Activated CD4-positive, alpha-beta memory T cell treated with anti-CD3 and anti-CD28 coated beads for 36 hours (primary cell): ENCODE measurements at regions of chr17 and their contacts with region 1.

Region 1: DNA sequence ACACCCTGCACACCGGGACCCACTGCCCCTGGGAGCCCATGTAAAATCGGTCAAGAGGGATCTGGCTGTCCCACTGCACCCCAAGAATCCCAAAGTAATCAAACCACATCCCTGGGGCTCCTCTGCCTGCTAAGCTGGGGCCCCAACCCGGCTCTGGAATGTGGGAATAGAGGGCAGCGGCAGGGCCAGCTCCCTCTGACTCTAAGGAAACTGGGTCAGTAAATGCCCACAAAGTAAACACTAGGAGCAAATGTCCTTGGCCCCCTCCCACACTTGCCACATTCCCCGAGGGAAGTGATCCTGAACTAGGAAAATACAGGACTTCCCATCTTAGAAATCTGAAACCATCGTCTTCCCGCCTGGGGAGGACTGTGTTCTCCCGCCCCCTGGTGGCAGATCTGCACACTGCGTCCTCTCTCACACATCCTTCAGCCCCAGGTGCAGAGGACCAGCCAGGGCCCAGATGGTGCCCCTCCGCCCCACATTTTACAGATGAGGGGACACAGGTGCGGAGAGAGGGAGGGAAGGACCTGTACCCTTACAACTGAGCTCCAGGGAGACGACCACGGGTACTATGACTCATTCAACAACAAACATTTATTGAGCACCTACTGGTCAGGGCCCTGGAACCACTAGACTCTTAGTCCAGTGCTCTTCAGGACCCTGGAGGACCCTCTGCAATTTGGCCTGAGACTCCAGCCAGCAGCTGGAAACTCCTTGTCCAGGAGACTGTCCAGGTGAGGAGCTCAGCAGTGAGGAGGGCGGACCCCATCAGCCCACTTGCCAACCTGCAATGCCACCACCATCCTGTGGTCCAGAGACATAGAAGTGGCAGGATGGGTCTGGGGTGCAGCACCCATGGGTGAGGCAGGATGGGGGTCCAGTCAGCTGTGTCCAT is 10.1 kb downstream of the P3H4 start:
- DNase-seq: peak; percentile 82
- H3K4me3 Mint-ChIP-seq: no peak overlapping the region
- H3K27ac Mint-ChIP-seq: peak overlapping the region; percentile 31
- H3K4me1 Mint-ChIP-seq: peaks cover 3% of the 10 kb centered on the region
- H3K27me3 Mint-ChIP-seq: no peaks in the 10 kb centered on the region

Region 2: GRCh38 chr17:41738077-41738735 is 63.4 kb before region 1 on chr17:
- CTCF ChIA-PET with region 1: interaction called, 65 read pairs
- POLR2A ChIA-PET with region 1: no interaction called
- intact Hi-C with region 1: loop called (anchors 1 kb)
- DNase-seq: peak; percentile 89
- H3K4me3 Mint-ChIP-seq: no peak overlapping the region
- H3K27ac Mint-ChIP-seq: no peak overlapping the region
- H3K4me1 Mint-ChIP-seq: peaks cover 5% of the 10 kb centered on the region
- H3K27me3 Mint-ChIP-seq: peaks cover 28% of the 10 kb centered on the region

Region 3: DNA sequence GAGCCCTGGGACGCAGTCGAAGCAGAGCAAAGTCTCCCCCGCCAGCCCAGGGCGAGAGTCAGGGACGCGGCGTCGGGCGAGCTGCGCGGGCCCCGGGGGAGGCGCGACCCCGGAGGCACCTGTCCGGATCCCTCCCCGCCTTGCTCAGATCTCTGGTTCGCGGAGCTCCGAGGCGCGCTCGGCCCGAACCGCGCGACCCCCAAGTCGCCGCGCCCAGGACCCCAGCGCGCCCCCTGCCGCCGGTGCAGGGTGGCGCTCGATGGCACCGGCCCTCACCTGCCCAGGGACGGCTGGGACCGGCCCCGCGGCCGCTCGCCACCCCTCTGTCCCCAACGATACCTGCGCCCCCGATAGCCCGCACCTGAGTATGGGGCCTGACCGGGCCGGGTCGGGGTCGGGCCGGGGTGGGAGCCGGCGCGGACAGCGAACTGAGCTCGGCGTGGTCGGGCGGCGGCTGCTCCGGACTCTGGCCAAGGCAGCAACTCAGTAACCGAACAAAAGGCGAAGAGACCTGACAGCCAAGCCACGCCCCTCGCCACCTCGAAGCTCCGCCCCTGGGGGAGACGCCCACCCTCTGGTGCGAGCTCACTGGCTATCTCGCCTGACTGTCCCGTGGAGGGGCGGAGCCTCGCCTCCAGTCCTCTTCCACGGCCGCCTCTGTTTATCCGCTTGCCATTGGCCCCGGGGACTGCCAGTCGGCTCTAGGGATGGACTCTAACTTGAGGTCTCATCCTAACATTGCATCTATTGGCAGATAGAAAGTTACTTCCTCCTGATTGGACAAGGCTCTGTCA is 15.2 kb before region 1 on chr17 and contains the start of gene JUP:
- CTCF ChIA-PET with region 1: interaction called, 20 read pairs
- POLR2A ChIA-PET with region 1: no interaction called
- intact Hi-C with region 1: no loop called
- DNase-seq: peak; percentile 94
- H3K4me3 Mint-ChIP-seq: peak within 1 kb of the TSS; percentile 32
- H3K27ac Mint-ChIP-seq: no peak within 1 kb of the TSS
- H3K4me1 Mint-ChIP-seq: peaks cover 12% of the 10 kb centered on the region
- H3K27me3 Mint-ChIP-seq: peaks cover 20% of the 10 kb centered on the region
- total RNA-seq, gene JUP: 0.12 to 0.29 TPM

Region 4: DNA sequence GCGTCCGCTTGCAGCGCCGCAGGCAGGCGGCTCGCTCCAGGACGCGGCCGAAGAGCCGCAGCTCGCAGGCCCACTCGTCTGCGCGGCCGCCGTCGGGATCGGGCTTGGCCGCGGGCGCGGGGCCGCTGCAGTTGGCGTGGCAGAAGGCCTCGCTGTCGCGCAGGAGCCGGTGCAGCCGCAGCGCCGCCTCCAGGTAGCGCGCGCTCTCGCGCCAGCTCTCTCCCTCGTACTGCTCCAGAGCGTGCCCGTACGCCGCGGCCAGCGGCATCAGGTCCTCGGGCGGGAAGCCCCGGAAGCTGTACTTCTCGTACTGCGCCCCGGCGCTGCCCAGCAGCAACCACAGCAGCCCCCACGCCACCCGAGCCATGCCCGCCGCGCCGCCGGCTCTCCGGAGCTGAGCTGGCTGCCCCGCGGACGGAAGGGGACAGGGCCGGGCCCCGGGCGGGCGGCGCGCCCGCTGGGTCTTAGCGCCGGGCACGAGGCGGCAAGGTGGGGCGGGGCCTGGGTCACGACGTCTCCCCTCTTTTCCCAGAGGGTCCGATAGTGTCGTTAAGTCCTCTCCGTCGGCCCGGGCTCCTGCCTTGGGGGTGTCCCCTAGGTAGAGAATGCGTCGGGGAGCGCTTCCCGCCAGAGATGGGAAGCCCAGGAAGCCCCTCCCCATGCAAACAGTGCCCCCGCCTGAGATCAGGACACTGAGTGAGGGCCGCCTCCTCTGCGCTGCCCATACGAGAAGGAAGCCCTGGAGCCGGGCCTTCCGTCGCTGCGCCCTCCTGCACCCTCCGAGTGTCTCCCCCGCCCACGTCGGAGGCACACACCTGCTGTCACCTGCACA is 10.1 kb after region 1 on chr17 and contains the start of gene P3H4:
- CTCF ChIA-PET with region 1: interaction called, 27 read pairs
- POLR2A ChIA-PET with region 1: no interaction called
- intact Hi-C with region 1: no loop called
- DNase-seq: peak; percentile 80
- H3K4me3 Mint-ChIP-seq: peak within 1 kb of the TSS; percentile 82
- H3K27ac Mint-ChIP-seq: peak within 1 kb of the TSS; percentile 30
- H3K4me1 Mint-ChIP-seq: peaks cover 17% of the 10 kb centered on the region
- H3K27me3 Mint-ChIP-seq: peaks cover 2% of the 10 kb centered on the region
- total RNA-seq, gene P3H4: 2.5 to 2.9 TPM